ENCODE measurements at regions of chr1 and their contacts with region 1.

Region 1: DNA sequence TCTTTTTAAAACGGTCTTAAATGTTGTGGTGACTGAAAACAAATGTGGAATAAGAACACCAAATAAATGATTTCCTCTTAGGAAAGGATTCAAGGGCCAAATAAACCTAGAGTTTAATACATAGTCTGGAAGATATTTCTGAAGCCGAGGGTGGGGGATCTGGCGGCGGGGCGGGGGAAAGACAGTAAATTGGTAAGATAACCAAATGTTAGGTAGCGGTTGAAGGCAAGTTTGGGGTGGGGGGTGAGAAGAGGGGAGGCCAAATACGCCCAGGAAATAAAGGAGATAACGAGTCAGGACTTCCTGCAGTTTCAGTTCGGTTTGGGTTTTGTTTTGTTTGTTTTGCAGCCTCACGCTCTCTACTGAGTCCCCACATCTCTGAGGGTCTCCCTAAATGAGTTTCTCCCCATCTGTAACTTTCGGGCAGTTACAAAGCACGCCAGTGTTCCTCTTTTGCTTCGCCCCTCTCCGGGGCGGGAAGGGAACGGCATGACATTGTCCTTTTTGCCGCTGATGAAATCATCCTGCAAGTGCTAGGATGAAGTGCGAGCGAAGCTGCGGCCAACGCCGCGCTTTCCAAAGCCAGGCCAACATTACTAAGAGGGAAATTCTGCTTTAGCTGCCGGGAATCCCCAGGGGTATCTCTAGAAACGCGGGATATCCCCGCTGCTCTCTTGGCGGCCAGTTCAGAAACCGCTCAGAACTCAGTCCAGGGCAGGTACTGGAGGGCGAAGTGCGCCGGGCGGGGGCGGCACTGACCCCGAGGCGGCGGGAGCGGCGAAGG is 844 bp downstream of the NIBAN1 start:
- DNase-seq: peak; percentile 84
- H3K4me3 Mint-ChIP-seq: peak overlapping the region; percentile 79
- H3K27ac Mint-ChIP-seq: peak overlapping the region; percentile 93
- H3K4me1 Mint-ChIP-seq: peaks cover 40% of the 10 kb centered on the region
- H3K27me3 Mint-ChIP-seq: peaks cover 25% of the 10 kb centered on the region

Region 2: GRCh38 chr1:184051485-184052193 is 921.8 kb before region 1 on chr1 and contains the start of gene TSEN15:
- CTCF ChIA-PET with region 1: no interaction called
- intact Hi-C with region 1: loop called (anchors 10 kb)
- DNase-seq: peak; percentile 84
- H3K4me3 Mint-ChIP-seq: peak within 1 kb of the TSS; percentile 96
- H3K27ac Mint-ChIP-seq: peak within 1 kb of the TSS; percentile 96
- H3K4me1 Mint-ChIP-seq: peaks cover 34% of the 10 kb centered on the region
- H3K27me3 Mint-ChIP-seq: peaks cover 5% of the 10 kb centered on the region
- total RNA-seq, gene TSEN15: 52.6 to 57.6 TPM

Region 3: DNA sequence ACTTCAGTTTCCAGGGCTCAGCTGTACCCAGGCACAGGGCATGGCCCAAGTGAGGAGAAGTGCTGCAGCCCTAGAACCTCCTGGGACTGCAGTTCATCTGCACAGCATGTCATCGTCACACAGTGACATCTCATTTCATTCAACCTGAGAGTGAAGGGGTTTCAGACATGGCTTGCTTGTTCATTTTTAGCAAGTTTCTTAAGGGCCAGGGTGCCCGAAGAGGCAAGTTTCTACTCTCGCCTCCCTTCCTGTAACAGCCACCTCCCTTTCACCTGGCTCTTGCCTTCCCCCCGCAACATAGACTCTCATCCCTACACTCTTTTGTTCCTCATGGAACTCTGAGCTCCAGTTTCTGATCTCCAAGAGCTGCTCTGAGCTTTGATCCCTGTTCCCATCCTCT is 478.5 kb before region 1 on chr1:
- CTCF ChIA-PET with region 1: no interaction called
- intact Hi-C with region 1: loop called (anchors 10 kb)
- DNase-seq: no peak
- H3K4me3 Mint-ChIP-seq: no peak overlapping the region
- H3K27ac Mint-ChIP-seq: no peak overlapping the region
- H3K4me1 Mint-ChIP-seq: peaks cover 14% of the 10 kb centered on the region
- H3K27me3 Mint-ChIP-seq: no peaks in the 10 kb centered on the region

Region 4: DNA sequence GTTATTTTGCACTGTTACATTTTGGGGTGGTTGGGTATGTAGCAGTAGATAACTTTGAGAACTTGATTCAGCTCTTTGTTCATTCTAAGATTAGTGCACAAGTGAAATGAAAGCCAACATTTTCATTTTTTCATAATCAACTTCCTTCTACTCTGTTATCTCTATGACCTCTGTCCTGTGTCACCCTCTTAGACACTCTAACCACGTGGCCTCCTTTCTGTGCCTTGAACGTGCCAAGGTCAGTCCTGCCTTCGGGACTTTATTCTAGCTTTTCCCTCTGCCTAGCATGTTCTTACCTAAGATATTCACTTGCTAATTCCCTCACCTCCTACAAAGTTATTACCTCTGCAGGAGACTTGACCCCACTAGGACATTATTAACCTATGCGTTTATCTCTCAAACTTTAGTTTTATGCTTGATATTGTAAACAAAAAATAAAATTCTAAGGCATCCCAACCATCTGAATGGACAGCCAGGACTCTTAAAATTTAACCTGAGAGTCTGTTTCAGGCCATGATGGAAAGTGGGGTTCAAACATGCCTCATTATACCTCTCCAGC is 199.6 kb before region 1 on chr1:
- CTCF ChIA-PET with region 1: no interaction called
- intact Hi-C with region 1: no loop called
- DNase-seq: no peak
- H3K4me3 Mint-ChIP-seq: no peak overlapping the region
- H3K27ac Mint-ChIP-seq: no peak overlapping the region
- H3K4me1 Mint-ChIP-seq: peaks cover 2% of the 10 kb centered on the region
- H3K27me3 Mint-ChIP-seq: no peaks in the 10 kb centered on the region

Region 5: DNA sequence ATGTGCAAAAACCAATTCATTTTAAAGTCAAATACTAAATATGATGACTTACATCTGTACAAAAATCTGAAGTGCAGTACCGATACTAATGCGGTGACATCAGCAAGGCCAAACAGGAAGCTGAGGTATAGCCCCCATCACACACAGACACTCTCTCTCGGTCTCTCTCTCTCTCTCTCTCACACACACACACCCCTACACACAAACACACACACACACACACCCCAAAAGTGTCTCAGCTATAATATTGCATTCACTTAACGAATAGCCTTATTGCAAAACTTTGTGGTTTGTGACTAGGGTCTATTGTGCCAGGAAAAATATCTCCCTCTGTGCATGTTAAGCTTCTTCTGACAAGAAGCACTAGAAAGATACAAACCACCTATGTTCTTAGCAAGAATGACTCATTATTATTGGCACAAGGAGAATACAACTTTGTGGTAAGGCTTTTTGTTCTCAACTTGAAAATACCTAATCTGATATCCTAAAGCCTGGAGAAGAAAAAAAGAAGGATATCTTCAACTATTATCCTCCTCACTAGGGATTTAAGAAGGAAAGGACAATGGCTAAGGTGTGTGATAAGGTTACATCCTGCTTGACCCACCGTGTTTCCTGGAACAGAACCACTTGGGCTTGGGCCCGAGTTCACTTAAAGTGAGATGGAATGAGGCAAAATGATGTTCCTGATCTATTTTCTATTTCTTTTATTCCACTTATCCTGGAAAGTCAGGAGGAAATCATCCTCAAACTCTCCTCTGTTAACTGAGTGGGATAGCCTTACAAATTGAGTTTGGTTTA is 106.3 kb before region 1 on chr1:
- CTCF ChIA-PET with region 1: interaction called, 3 read pairs
- intact Hi-C with region 1: loop called (anchors 1 kb)
- DNase-seq: peak; percentile 80
- H3K4me3 Mint-ChIP-seq: peak overlapping the region; percentile 14
- H3K27ac Mint-ChIP-seq: peak overlapping the region; percentile 94
- H3K4me1 Mint-ChIP-seq: peaks cover 32% of the 10 kb centered on the region
- H3K27me3 Mint-ChIP-seq: peaks cover 10% of the 10 kb centered on the region

Region 6: DNA sequence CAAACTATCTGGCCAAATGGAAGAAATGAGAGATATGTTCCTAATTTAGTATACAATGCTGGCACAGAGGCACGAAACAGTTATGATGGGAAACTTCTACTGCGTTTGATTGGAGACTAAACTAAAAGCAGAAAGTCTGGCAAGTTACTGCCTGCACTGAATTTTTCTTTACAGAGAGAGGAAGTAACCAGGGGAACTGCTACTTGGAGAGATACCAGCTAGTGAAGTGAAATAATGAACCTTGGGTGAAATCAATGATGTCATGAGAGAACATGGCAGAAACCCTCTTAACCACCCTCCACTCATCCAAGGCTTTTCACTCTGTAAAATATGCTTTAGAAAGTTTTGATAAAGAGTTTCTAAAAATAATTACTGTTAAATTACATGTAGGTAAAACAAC is 28.4 kb before region 1 on chr1:
- CTCF ChIA-PET with region 1: no interaction called
- intact Hi-C with region 1: loop called (anchors 2 kb)
- DNase-seq: no peak
- H3K4me3 Mint-ChIP-seq: no peak overlapping the region
- H3K27ac Mint-ChIP-seq: no peak overlapping the region
- H3K4me1 Mint-ChIP-seq: peaks cover 30% of the 10 kb centered on the region
- H3K27me3 Mint-ChIP-seq: peaks cover 13% of the 10 kb centered on the region

Region 7: GRCh38 chr1:185360714-185361113 is 387.2 kb after region 1 on chr1:
- CTCF ChIA-PET with region 1: no interaction called
- intact Hi-C with region 1: no loop called
- DNase-seq: no peak
- H3K4me3 Mint-ChIP-seq: no peak overlapping the region
- H3K27ac Mint-ChIP-seq: no peak overlapping the region
- H3K4me1 Mint-ChIP-seq: no peaks in the 10 kb centered on the region
- H3K27me3 Mint-ChIP-seq: no peaks in the 10 kb centered on the region

Region 8: DNA sequence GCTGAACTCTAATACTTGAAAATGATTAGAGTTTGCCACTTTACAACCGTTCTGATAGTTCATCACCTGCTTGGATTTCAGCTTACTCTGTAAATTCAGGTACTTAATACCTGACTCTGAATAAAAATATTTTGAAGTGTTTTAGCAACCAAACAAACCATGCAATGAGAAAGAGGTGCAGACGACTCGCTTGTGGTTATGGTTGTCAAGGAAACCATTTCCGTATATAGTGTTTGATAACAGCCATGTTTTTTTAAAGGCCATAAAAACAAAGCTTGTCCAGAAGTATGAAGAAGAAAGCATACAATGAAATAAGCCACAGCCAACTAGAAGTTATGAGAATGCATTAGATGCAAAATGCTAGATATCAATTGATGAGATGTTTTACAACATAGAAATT is 593.5 kb after region 1 on chr1:
- CTCF ChIA-PET with region 1: no interaction called
- intact Hi-C with region 1: loop called (anchors 5 kb)
- DNase-seq: peak; percentile 57
- H3K4me3 Mint-ChIP-seq: no peak overlapping the region
- H3K27ac Mint-ChIP-seq: peak overlapping the region; percentile 70
- H3K4me1 Mint-ChIP-seq: peaks cover 68% of the 10 kb centered on the region
- H3K27me3 Mint-ChIP-seq: no peaks in the 10 kb centered on the region